Naive thymus-derived CD4-positive, alpha-beta T cell (primary cell): ENCODE measurements at regions of chr5 and their contacts with region 1.

Region 1: GRCh38 chr5:130386155-130386554 is 481.9 kb downstream of the CHSY3 start:
- DNase-seq: no peak
- ATAC-seq: no peak
- H3K4me3 ChIP-seq: no peak overlapping the region
- H3K4me3 Mint-ChIP-seq: no peak overlapping the region
- H3K27ac ChIP-seq: no peak overlapping the region
- H3K27ac Mint-ChIP-seq: peak overlapping the region in 1 of 9 donors; percentile 13
- H3K4me1 ChIP-seq: no peaks in the 10 kb centered on the region
- H3K4me1 Mint-ChIP-seq: no peaks in the 10 kb centered on the region
- H3K27me3 ChIP-seq: no peaks in the 10 kb centered on the region
- H3K27me3 Mint-ChIP-seq: peaks cover 0 to 4% (median 0%) of the 10 kb centered on the region in 5 donors

Region 2: GRCh38 chr5:130365956-130366355 is 20.2 kb before region 1 on chr5:
- CTCF ChIA-PET with region 1: interaction called, 3 read pairs
- POLR2A ChIA-PET with region 1: no interaction called
- intact Hi-C with region 1: loop called in 1 of 2 experiments (anchors 2 kb)
- DNase-seq: no peak
- ATAC-seq: no peak
- H3K4me3 ChIP-seq: no peak overlapping the region
- H3K4me3 Mint-ChIP-seq: no peak overlapping the region
- H3K27ac ChIP-seq: no peak overlapping the region
- H3K27ac Mint-ChIP-seq: no peak overlapping the region
- H3K4me1 ChIP-seq: no peaks in the 10 kb centered on the region
- H3K4me1 Mint-ChIP-seq: no peaks in the 10 kb centered on the region
- H3K27me3 ChIP-seq: no peaks in the 10 kb centered on the region
- H3K27me3 Mint-ChIP-seq: peaks cover 0 to 4% (median 4%) of the 10 kb centered on the region in 5 donors